ENCODE measurements at regions of chr15 and their contacts with region 1.

Region 1: GRCh38 chr15:90583471-90584252 is 53.9 kb downstream of the CRTC3 start:
- DNase-seq: no peak
- ATAC-seq: no peak
- H3K4me3 Mint-ChIP-seq: no peak overlapping the region
- H3K27ac Mint-ChIP-seq: peak overlapping the region; percentile 11
- H3K4me1 Mint-ChIP-seq: peaks cover 60% of the 10 kb centered on the region
- H3K27me3 Mint-ChIP-seq: no peaks in the 10 kb centered on the region
- CTCF ChIP-seq: no peak

Region 2: DNA sequence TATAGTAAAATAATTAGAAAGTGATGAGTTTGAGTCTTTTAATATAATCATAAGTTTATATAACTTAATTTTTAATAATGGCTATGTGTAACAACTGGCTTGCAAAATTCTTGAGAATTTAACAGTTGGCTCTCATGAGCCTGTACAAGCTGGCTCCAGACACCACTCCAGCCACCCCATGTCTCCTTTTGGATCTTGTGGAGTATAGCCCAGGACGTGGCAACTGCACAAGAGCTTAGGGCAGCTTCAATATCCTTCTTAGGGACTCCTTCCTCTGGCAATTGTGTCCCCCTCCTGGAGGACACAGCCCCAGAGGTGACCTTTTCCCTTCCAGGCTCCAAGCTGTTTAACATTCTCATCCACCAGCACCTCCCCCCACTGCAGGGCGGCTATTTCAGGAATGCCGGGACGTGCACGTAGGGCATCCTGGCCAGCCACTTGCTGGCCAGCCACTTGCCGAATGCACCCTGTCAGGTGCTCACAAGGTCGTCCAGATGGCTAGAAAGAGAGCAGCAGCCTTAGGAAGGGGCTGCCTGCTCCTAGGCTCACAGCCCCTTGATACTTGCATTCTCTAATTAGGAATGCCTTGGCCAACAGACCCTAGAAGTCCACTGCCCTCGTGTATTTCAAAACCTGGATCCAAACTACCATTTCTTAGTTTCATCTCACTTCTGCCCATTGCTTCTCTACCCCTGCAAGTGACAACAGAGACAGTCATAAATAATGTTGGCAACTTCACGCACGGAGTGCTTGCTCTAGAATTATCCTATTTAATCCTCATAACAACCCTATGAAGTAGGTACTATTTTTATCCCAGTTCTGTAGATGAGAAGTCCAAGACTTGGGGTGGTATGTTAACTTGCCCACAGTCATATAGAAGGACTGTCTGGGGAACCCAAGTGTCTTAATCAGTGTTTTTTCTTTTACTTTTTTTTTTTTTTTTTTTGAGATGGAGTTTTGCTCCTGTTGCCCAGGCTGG is 456.9 kb before region 1 on chr15:
- CTCF ChIA-PET with region 1: no interaction called
- POLR2A ChIA-PET with region 1: no interaction called
- intact Hi-C with region 1: no loop called
- DNase-seq: no peak
- ATAC-seq: no peak
- H3K4me3 Mint-ChIP-seq: no peak overlapping the region
- H3K27ac Mint-ChIP-seq: no peak overlapping the region
- H3K4me1 Mint-ChIP-seq: no peaks in the 10 kb centered on the region
- H3K27me3 Mint-ChIP-seq: peaks cover 5% of the 10 kb centered on the region
- CTCF ChIP-seq: no peak

Region 3: GRCh38 chr15:90564051-90564450 is 19.6 kb before region 1 on chr15:
- CTCF ChIA-PET with region 1: no interaction called
- POLR2A ChIA-PET with region 1: no interaction called
- intact Hi-C with region 1: no loop called
- DNase-seq: no peak
- ATAC-seq: peak; percentile 22
- H3K4me3 Mint-ChIP-seq: no peak overlapping the region
- H3K27ac Mint-ChIP-seq: peak overlapping the region; percentile 89
- H3K4me1 Mint-ChIP-seq: peaks cover 85% of the 10 kb centered on the region
- H3K27me3 Mint-ChIP-seq: no peaks in the 10 kb centered on the region
- CTCF ChIP-seq: no peak

Region 4: GRCh38 chr15:90598031-90598577 is 14.4 kb after region 1 on chr15:
- CTCF ChIA-PET with region 1: interaction called, 15 read pairs
- POLR2A ChIA-PET with region 1: interaction called, 13 read pairs
- intact Hi-C with region 1: no loop called
- DNase-seq: peak; percentile 38
- ATAC-seq: peak; percentile 5
- H3K4me3 Mint-ChIP-seq: no peak overlapping the region
- H3K27ac Mint-ChIP-seq: peak overlapping the region; percentile 84
- H3K4me1 Mint-ChIP-seq: peaks cover 70% of the 10 kb centered on the region
- H3K27me3 Mint-ChIP-seq: no peaks in the 10 kb centered on the region
- CTCF ChIP-seq: no peak

Region 5: GRCh38 chr15:90603893-90604292 is 20.2 kb after region 1 on chr15:
- CTCF ChIA-PET with region 1: interaction called, 15 read pairs
- POLR2A ChIA-PET with region 1: interaction called, 3 read pairs
- intact Hi-C with region 1: no loop called
- DNase-seq: peak; percentile 67
- ATAC-seq: peak; percentile 47
- H3K4me3 Mint-ChIP-seq: no peak overlapping the region
- H3K27ac Mint-ChIP-seq: peak overlapping the region; percentile 23
- H3K4me1 Mint-ChIP-seq: peaks cover 33% of the 10 kb centered on the region
- H3K27me3 Mint-ChIP-seq: no peaks in the 10 kb centered on the region
- CTCF ChIP-seq: peak; percentile 35

Measured in activated CD8-positive, alpha-beta T cell treated with anti-CD3 and anti-CD28 coated beads for 36 hours (primary cell).